Gastrocnemius medialis (tissue), 4 donors: ENCODE measurements at regions of chr2 and their contacts with region 1.

Region 1: DNA sequence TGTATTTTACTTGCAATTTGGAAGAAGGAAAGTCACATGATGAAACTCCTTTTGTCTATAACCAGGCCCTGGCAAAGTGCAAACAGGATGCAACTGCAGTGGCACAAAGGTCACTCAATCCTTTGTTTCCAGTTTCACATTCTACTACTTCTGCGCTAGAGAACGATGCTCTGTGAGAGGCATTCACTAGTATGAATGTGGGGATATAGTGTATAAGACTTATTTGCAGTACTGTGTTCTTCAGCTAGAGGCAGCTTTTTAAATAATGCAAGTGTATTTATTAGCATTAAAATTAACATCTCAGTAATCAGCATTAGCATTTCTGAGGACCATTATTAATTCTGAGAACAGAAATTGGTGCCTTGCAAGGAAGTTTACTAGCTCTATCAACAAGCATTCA is 68.9 kb downstream of the PRPF40A start:
- DNase-seq: no peak
- ATAC-seq: no peak
- H3K4me3 ChIP-seq: no peak overlapping the region
- H3K27ac ChIP-seq: peak overlapping the region; percentile 22 to 60 (median 30)
- H3K4me1 ChIP-seq: peaks cover 12 to 24% of the 10 kb centered on the region in 2 donors
- H3K27me3 ChIP-seq: no peaks in the 10 kb centered on the region
- CTCF ChIP-seq: peak in 2 of 5 experiments; percentile 13 to 25
- POLR2A ChIP-seq: no peak

Region 2: DNA sequence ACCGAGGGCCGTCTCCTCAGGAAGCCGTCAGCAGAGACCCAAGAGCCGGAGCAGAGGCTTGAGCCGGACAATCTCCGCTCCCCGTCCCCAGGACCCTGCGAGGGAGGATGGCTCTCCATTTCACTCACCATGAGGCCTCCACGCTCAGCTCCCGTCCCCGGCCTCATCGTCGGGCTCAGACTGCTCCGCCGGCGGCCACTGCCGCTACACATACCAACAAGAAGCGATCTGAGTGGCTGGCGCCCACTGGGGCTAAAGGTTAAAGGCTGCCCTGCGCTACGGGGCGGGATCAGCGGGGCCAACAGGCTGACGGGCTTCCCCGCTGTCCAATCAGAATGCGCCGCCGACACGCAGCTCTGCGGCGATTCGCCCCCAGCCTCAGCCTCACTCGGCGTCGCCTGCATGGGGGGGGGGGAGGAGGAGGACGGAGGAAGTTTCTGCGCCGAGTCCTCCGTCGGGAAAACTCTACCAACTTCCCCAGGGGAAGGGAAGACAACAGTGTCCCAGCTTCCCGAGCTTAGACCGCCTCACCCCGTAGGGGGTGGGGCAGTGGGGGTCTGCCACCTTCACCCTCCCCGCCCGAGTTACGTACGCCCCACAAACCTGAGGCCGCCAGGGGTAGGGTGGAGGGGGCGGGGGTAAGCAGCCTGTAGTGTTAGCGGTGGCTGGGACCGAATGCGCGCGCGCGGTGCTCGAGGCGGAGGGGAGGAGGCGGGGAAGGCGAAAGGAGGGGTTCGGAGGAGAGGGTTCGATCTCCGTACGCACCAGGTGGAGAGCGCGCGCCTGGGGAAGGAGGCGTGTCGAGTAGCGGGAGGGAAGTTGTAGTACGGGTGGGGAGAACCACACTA is 69.1 kb after region 1 on chr2 and contains the start of gene PRPF40A:
- in situ Hi-C with region 1: no loop called
- intact Hi-C with region 1: loop called (anchors 5 kb)
- DNase-seq: peak; percentile 99
- ATAC-seq: peak; percentile 81 to 82
- H3K4me3 ChIP-seq: peak within 1 kb of the TSS; percentile 89 to 99 (median 94)
- H3K27ac ChIP-seq: peak within 1 kb of the TSS; percentile 95 to 99 (median 98)
- H3K4me1 ChIP-seq: peaks cover 40 to 46% of the 10 kb centered on the region in 2 donors
- H3K27me3 ChIP-seq: no peaks in the 10 kb centered on the region
- CTCF ChIP-seq: peak in 1 of 5 experiments; percentile 19
- POLR2A ChIP-seq: peak; percentile 79 to 83
- total RNA-seq, gene PRPF40A: 65.3 to 78.0 (median 69.9) TPM

Region 3: GRCh38 chr2:153028626-153029025 is 380.3 kb after region 1 on chr2:
- in situ Hi-C with region 1: no loop called
- intact Hi-C with region 1: no loop called
- DNase-seq: no peak
- ATAC-seq: no peak
- H3K4me3 ChIP-seq: no peak overlapping the region
- H3K27ac ChIP-seq: no peak overlapping the region
- H3K4me1 ChIP-seq: no peaks in the 10 kb centered on the region
- H3K27me3 ChIP-seq: no peaks in the 10 kb centered on the region
- CTCF ChIP-seq: no peak
- POLR2A ChIP-seq: no peak